GM12878 (cell line): ENCODE measurements at regions of chr13 and their contacts with region 1.

Region 1: GRCh38 chr13:80030491-80030890 is 310.4 kb downstream of the SPRY2 start:
- DNase-seq: no peak
- ATAC-seq: peak; percentile 76
- H3K4me3 ChIP-seq: no peak overlapping the region
- H3K27ac ChIP-seq: no peak overlapping the region
- H3K4me1 ChIP-seq: no peaks in the 10 kb centered on the region
- H3K27me3 ChIP-seq: no peaks in the 10 kb centered on the region
- CTCF ChIP-seq: peak in 2 of 3 experiments; percentile 17 to 22; a peak in 2 of 6 replicates
- EP300 ChIP-seq: no peak
- POLR2A ChIP-seq: no peak
- RAD21 ChIP-seq: peak; percentile 26; the same call in 1 of the 2 replicates

Region 2: GRCh38 chr13:80444240-80445015 is 413.9 kb after region 1 on chr13:
- CTCF ChIA-PET with region 1: no interaction called
- POLR2A ChIA-PET with region 1: no interaction called
- RAD21 ChIA-PET with region 1: no interaction called
- SMC1A ChIA-PET with region 1: no interaction called
- in situ Hi-C with region 1: no loop called
- intact Hi-C with region 1: loop called (anchors 10 kb)
- DNase-seq: no peak
- ATAC-seq: peak; percentile 51
- H3K4me3 ChIP-seq: no peak overlapping the region
- H3K27ac ChIP-seq: no peak overlapping the region
- H3K4me1 ChIP-seq: no peaks in the 10 kb centered on the region
- H3K27me3 ChIP-seq: no peaks in the 10 kb centered on the region
- CTCF ChIP-seq: no peak
- EP300 ChIP-seq: no peak
- POLR2A ChIP-seq: no peak
- RAD21 ChIP-seq: no peak